ENCODE measurements at regions of chr14 and their contacts with region 1.

Region 1: GRCh38 chr14:64220466-64220865 is 73.7 kb downstream of the ESR2 start:
- DNase-seq: peak; percentile 63 to 75
- ATAC-seq: peak; percentile 68 to 93 (median 86)
- H3K4me3 ChIP-seq: no peak overlapping the region
- H3K27ac ChIP-seq: peak overlapping the region; percentile 43 to 81 (median 73)
- H3K4me1 ChIP-seq: peaks cover 9 to 67% (median 27%) of the 10 kb centered on the region in 9 donors
- H3K27me3 ChIP-seq: no peaks in the 10 kb centered on the region
- CTCF ChIP-seq: no peak

Region 2: GRCh38 chr14:64186231-64187129 is 34.0 kb before region 1 on chr14:
- intact Hi-C with region 1: loop called in 1 of 10 experiments (anchors 5 kb)
- DNase-seq: no peak
- ATAC-seq: no peak
- H3K4me3 ChIP-seq: no peak overlapping the region
- H3K27ac ChIP-seq: no peak overlapping the region
- H3K4me1 ChIP-seq: no peaks in the 10 kb centered on the region
- H3K27me3 ChIP-seq: no peaks in the 10 kb centered on the region
- CTCF ChIP-seq: no peak

Region 3: GRCh38 chr14:64198486-64198885 is 22.0 kb before region 1 on chr14:
- intact Hi-C with region 1: loop called in 1 of 10 experiments (anchors 2 kb)
- DNase-seq: no peak
- ATAC-seq: peak in 4 of 8 donors; percentile 27 to 33 (median 31)
- H3K4me3 ChIP-seq: peak overlapping the region in 1 of 10 donors; percentile 53
- H3K27ac ChIP-seq: peak overlapping the region in 9 of 10 donors; percentile 71 to 88 (median 81)
- H3K4me1 ChIP-seq: peaks cover 4 to 70% (median 51%) of the 10 kb centered on the region in 9 donors
- H3K27me3 ChIP-seq: no peaks in the 10 kb centered on the region
- CTCF ChIP-seq: no peak

Region 4: GRCh38 chr14:64423987-64424386 is 203.5 kb after region 1 on chr14:
- intact Hi-C with region 1: no loop called
- DNase-seq: no peak
- ATAC-seq: no peak
- H3K4me3 ChIP-seq: no peak overlapping the region
- H3K27ac ChIP-seq: no peak overlapping the region
- H3K4me1 ChIP-seq: no peaks in the 10 kb centered on the region
- H3K27me3 ChIP-seq: no peaks in the 10 kb centered on the region
- CTCF ChIP-seq: no peak

Measured in heart right ventricle (tissue), 16 donors.